ENCODE measurements at regions of chr5 and their contacts with region 1.

Region 1: GRCh38 chr5:80093796-80094195 is 58.6 kb downstream of the THBS4 start:
- DNase-seq: no peak
- H3K4me3 ChIP-seq: no peak overlapping the region
- H3K27ac ChIP-seq: no peak overlapping the region
- H3K4me1 ChIP-seq: no peaks in the 10 kb centered on the region
- H3K27me3 ChIP-seq: no peaks in the 10 kb centered on the region
- CTCF ChIP-seq: no peak
- POLR2A ChIP-seq: no peak

Region 2: DNA sequence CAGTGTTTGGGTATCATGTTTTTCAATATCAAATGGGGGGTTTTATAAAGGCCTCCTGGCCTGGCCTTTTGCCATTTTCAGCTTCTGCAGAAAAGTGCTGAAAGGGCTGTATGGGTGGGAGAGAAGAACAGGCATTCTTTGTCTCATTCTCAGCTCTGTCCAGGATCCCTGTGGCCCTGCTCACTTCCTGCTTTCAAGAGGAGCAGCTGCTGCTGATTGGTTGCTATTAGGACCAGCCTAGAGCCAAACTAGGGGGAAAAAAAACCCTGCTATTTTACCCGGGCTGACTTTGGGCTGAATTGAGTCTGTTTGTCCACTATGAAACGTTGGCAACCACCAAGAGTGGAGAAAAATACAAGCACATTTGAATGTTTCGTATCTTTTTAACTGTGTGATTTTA is 287.1 kb before region 1 on chr5:
- intact Hi-C with region 1: no loop called
- DNase-seq: no peak
- H3K4me3 ChIP-seq: no peak overlapping the region
- H3K27ac ChIP-seq: no peak overlapping the region
- H3K4me1 ChIP-seq: no peaks in the 10 kb centered on the region
- H3K27me3 ChIP-seq: no peaks in the 10 kb centered on the region
- CTCF ChIP-seq: no peak
- POLR2A ChIP-seq: no peak

Region 3: GRCh38 chr5:80308526-80308925 is 214.7 kb after region 1 on chr5:
- intact Hi-C with region 1: loop called (anchors 10 kb)
- DNase-seq: no peak
- H3K4me3 ChIP-seq: no peak overlapping the region
- H3K27ac ChIP-seq: no peak overlapping the region
- H3K4me1 ChIP-seq: no peaks in the 10 kb centered on the region
- H3K27me3 ChIP-seq: no peaks in the 10 kb centered on the region
- CTCF ChIP-seq: no peak
- POLR2A ChIP-seq: no peak

Region 4: GRCh38 chr5:80672140-80672736 is 578.4 kb after region 1 on chr5:
- intact Hi-C with region 1: loop called (anchors 10 kb)
- DNase-seq: peak; percentile 47 to 61
- H3K4me3 ChIP-seq: no peak overlapping the region
- H3K27ac ChIP-seq: no peak overlapping the region
- H3K4me1 ChIP-seq: no peaks in the 10 kb centered on the region
- H3K27me3 ChIP-seq: no peaks in the 10 kb centered on the region
- CTCF ChIP-seq: peak; percentile 56 to 64 (median 62)
- POLR2A ChIP-seq: no peak